ENCODE measurements at regions of chr11 and their contacts with region 1.

Region 1: GRCh38 chr11:59802639-59803176 is 7.9 kb downstream of the MRPL16 start:
- DNase-seq: no peak
- ATAC-seq: peak; percentile 35

Region 2: GRCh38 chr11:59753650-59754493 is 48.8 kb before region 1 on chr11:
- intact Hi-C with region 1: loop called (anchors 2 to 5 kb)
- DNase-seq: peak; percentile 87 to 92
- ATAC-seq: peak; percentile 51